AG04449 (cell line): ENCODE measurements at regions of chr11 and their contacts with region 1.

Region 1: GRCh38 chr11:66466225-66467027 is at the start of gene PELI3:
- DNase-seq: peak; percentile 41
- H3K4me3 ChIP-seq: peak within 1 kb of the TSS; percentile 69
- CTCF ChIP-seq: no peak

Region 2: GRCh38 chr11:66480117-66480938 is 13.9 kb after region 1 on chr11 and contains the start of gene DPP3:
- CTCF ChIA-PET with region 1: interaction called, 66 read pairs
- POLR2A ChIA-PET with region 1: interaction called, 9 read pairs
- DNase-seq: peak; percentile 73
- H3K4me3 ChIP-seq: peak within 1 kb of the TSS; percentile 86
- CTCF ChIP-seq: no peak